Activated B cell treated with CpG ODN at 0.5 μM for 24 hours (primary cell): ENCODE measurements at regions of chr1 and their contacts with region 1.

Region 1: GRCh38 chr1:218330043-218330623 is 15.0 kb upstream of the TGFB2 start:
- DNase-seq: no peak
- ATAC-seq: peak; percentile 70
- H3K4me3 Mint-ChIP-seq: no peak overlapping the region
- H3K27ac Mint-ChIP-seq: no peak overlapping the region
- H3K4me1 Mint-ChIP-seq: no peaks in the 10 kb centered on the region
- H3K27me3 Mint-ChIP-seq: no peaks in the 10 kb centered on the region
- CTCF ChIP-seq: peak; percentile 65

Region 2: GRCh38 chr1:218090459-218090858 is 239.7 kb before region 1 on chr1:
- CTCF ChIA-PET with region 1: no interaction called
- POLR2A ChIA-PET with region 1: no interaction called
- intact Hi-C with region 1: no loop called
- DNase-seq: no peak
- ATAC-seq: no peak
- H3K4me3 Mint-ChIP-seq: no peak overlapping the region
- H3K27ac Mint-ChIP-seq: no peak overlapping the region
- H3K4me1 Mint-ChIP-seq: no peaks in the 10 kb centered on the region
- H3K27me3 Mint-ChIP-seq: no peaks in the 10 kb centered on the region
- CTCF ChIP-seq: no peak

Region 3: GRCh38 chr1:218101409-218101808 is 228.7 kb before region 1 on chr1:
- CTCF ChIA-PET with region 1: no interaction called
- POLR2A ChIA-PET with region 1: no interaction called
- intact Hi-C with region 1: no loop called
- DNase-seq: no peak
- ATAC-seq: no peak
- H3K4me3 Mint-ChIP-seq: no peak overlapping the region
- H3K27ac Mint-ChIP-seq: no peak overlapping the region
- H3K4me1 Mint-ChIP-seq: no peaks in the 10 kb centered on the region
- H3K27me3 Mint-ChIP-seq: no peaks in the 10 kb centered on the region
- CTCF ChIP-seq: no peak

Region 4: DNA sequence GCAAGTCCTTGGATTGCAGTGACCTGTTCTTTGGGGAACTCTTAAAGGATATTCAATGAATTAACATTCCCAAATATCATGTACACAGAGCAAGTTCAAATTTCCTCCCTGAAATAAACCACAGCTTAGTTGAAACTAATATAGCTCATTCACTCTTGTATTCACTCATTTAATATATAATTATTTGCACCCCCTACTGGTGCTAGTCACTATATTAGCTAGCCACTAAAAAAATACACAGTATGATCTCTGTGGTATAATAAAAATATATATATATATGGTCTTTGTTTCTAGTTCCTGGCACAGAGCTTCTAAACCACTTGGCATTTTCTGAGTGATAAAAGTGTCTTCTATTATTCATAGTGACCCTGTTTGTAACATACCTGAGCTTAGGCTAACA is 666.2 kb after region 1 on chr1:
- CTCF ChIA-PET with region 1: no interaction called
- POLR2A ChIA-PET with region 1: no interaction called
- intact Hi-C with region 1: loop called (anchors 5 kb)
- DNase-seq: no peak
- ATAC-seq: no peak
- H3K4me3 Mint-ChIP-seq: no peak overlapping the region
- H3K27ac Mint-ChIP-seq: no peak overlapping the region
- H3K4me1 Mint-ChIP-seq: no peaks in the 10 kb centered on the region
- H3K27me3 Mint-ChIP-seq: no peaks in the 10 kb centered on the region
- CTCF ChIP-seq: no peak

Region 5: GRCh38 chr1:219317762-219318353 is 987.7 kb after region 1 on chr1:
- CTCF ChIA-PET with region 1: no interaction called
- POLR2A ChIA-PET with region 1: no interaction called
- intact Hi-C with region 1: loop called (anchors 10 kb)
- DNase-seq: no peak
- ATAC-seq: no peak
- H3K4me3 Mint-ChIP-seq: no peak overlapping the region
- H3K27ac Mint-ChIP-seq: no peak overlapping the region
- H3K4me1 Mint-ChIP-seq: no peaks in the 10 kb centered on the region
- H3K27me3 Mint-ChIP-seq: no peaks in the 10 kb centered on the region
- CTCF ChIP-seq: no peak

Region 6: DNA sequence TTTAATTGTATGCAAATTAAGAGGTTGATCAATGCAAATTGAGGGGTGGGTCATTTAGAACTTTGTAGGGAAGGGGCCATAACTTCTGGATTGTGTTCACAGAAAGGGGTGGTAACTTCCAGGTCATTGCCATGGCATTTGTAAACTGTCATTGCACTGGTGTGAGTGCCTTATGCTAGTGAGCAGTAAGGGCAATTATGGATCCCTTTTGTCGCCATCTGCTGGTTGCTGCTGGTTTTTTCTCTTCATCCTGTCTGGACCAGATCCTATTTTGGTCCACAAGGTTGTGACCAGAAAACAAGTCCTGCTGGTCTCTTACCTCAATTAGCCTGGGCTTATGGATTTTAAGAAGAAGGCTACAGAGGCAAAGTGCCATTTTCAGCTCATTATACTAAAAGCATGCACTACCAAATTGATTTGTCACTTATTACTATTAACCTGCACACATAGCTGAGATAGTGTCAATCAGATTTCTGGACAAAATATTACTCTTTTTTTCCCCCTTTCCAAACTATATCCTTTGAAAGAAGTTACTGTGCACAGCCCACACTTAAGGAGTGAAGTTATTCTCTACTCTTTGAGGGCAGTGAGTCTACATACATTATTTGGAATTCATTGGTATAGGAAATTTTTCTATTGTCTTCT is 1086.6 kb after region 1 on chr1:
- CTCF ChIA-PET with region 1: interaction called, 4 read pairs
- POLR2A ChIA-PET with region 1: no interaction called
- intact Hi-C with region 1: loop called (anchors 1 kb)
- DNase-seq: peak; percentile 28
- ATAC-seq: peak; percentile 65
- H3K4me3 Mint-ChIP-seq: no peak overlapping the region
- H3K27ac Mint-ChIP-seq: no peak overlapping the region
- H3K4me1 Mint-ChIP-seq: no peaks in the 10 kb centered on the region
- H3K27me3 Mint-ChIP-seq: no peaks in the 10 kb centered on the region
- CTCF ChIP-seq: peak; percentile 31

Region 7: GRCh38 chr1:219660666-219661463 is 1330.7 kb after region 1 on chr1:
- CTCF ChIA-PET with region 1: no interaction called
- POLR2A ChIA-PET with region 1: no interaction called
- intact Hi-C with region 1: loop called (anchors 2 kb)
- DNase-seq: no peak
- ATAC-seq: no peak
- H3K4me3 Mint-ChIP-seq: peak overlapping the region; percentile 61
- H3K27ac Mint-ChIP-seq: no peak overlapping the region
- H3K4me1 Mint-ChIP-seq: peaks cover 5% of the 10 kb centered on the region
- H3K27me3 Mint-ChIP-seq: peaks cover 10% of the 10 kb centered on the region
- CTCF ChIP-seq: no peak